ENCODE measurements at regions of chr3 and their contacts with region 1.

Region 1: GRCh38 chr3:159804726-159805410 is 183.8 kb upstream of the IL12A start:
- DNase-seq: peak; percentile 58
- H3K4me3 ChIP-seq: no peak overlapping the region
- H3K27ac ChIP-seq: no peak overlapping the region
- H3K4me1 ChIP-seq: no peaks in the 10 kb centered on the region
- CTCF ChIP-seq: peak; percentile 83

Region 2: GRCh38 chr3:159322322-159322939 is 482.4 kb before region 1 on chr3:
- CTCF ChIA-PET with region 1: no interaction called
- POLR2A ChIA-PET with region 1: no interaction called
- intact Hi-C with region 1: loop called (anchors 2 kb)
- DNase-seq: peak; percentile 11
- H3K4me3 ChIP-seq: no peak overlapping the region
- H3K27ac ChIP-seq: no peak overlapping the region
- H3K4me1 ChIP-seq: no peaks in the 10 kb centered on the region
- CTCF ChIP-seq: peak; percentile 90

Measured in OCI-LY7 (cell line).